ENCODE measurements at regions of chr17 and their contacts with region 1.

Region 1: GRCh38 chr17:43832976-43833829 is at the start of gene MPP3:
- DNase-seq: no peak
- H3K4me3 ChIP-seq: peak within 1 kb of the TSS; percentile 74 to 96 (median 90)
- H3K27ac ChIP-seq: peak within 1 kb of the TSS; percentile 73 to 81 (median 78)
- H3K4me1 ChIP-seq: peaks cover 20 to 28% (median 24%) of the 10 kb centered on the region in 4 donors
- H3K27me3 ChIP-seq: no peaks in the 10 kb centered on the region
- CTCF ChIP-seq: no peak
- EP300 ChIP-seq: no peak
- POLR2A ChIP-seq: no peak
- total RNA-seq, gene MPP3: 5.0 to 9.9 (median 6.2) TPM

Region 2: DNA sequence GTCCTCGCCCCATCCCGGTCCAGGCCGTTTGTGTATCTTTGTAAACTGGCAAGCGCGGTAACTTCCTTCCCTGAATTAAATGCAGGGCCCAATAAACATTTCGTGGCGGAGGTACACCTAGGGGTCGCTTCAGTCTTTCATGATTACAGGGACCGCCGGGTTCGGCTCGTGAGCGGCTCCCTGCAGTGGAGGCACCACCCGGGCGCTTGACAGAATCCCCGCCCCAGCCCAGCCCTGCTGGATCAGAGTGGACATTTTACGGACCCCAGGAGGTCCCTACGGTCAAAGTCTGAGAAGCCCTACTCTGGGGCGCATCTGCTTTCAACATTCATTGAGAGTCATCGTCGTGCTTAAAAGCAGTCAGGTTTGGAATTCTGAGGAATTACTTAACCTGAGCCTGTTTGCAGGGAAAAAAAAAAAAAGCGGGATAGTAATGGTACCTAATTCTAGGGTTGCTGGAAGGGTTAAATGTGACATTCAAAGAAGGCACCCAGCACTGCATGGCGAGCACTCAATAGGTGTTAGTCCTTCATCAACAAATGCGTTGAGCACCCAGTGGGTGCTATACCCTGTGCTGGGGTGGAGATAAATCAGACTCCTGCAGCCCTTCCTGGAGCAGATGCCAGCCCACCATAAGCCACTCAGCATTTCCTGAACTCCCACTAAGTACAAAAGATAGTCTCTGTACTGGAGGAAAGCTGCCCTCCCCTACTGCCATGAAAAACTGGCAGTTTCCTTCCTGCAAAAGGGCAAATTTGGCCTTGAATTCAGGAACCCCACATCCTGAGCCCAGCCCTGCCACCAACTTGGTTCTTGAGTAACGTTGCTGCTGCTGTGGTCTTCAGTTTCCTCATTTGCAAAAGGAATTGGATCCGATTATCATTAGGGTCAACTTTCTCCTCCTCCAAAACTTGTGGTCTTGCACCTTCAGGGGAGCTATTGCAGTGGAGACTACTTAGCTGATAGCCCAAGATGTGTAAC is 53.8 kb before region 1 on chr17:
- intact Hi-C with region 1: loop called (anchors 5 kb)
- DNase-seq: no peak
- H3K4me3 ChIP-seq: peak overlapping the region; percentile 87 to 99 (median 91)
- H3K27ac ChIP-seq: peak overlapping the region; percentile 97 to 100 (median 100)
- H3K4me1 ChIP-seq: peaks cover 29 to 46% (median 39%) of the 10 kb centered on the region in 4 donors
- H3K27me3 ChIP-seq: no peaks in the 10 kb centered on the region
- CTCF ChIP-seq: peak in 2 of 3 experiments; percentile 12 to 27
- EP300 ChIP-seq: no peak
- POLR2A ChIP-seq: no peak

Region 3: GRCh38 chr17:43803758-43804157 is 29.4 kb before region 1 on chr17:
- intact Hi-C with region 1: no loop called
- DNase-seq: no peak
- H3K4me3 ChIP-seq: no peak overlapping the region
- H3K27ac ChIP-seq: no peak overlapping the region
- H3K4me1 ChIP-seq: no peaks in the 10 kb centered on the region
- H3K27me3 ChIP-seq: no peaks in the 10 kb centered on the region
- CTCF ChIP-seq: no peak
- EP300 ChIP-seq: no peak
- POLR2A ChIP-seq: no peak

Measured in esophagus muscularis mucosa (tissue), 4 donors.